GM12878 (cell line): ENCODE measurements at regions of chr12 and their contacts with region 1.

Region 1: DNA sequence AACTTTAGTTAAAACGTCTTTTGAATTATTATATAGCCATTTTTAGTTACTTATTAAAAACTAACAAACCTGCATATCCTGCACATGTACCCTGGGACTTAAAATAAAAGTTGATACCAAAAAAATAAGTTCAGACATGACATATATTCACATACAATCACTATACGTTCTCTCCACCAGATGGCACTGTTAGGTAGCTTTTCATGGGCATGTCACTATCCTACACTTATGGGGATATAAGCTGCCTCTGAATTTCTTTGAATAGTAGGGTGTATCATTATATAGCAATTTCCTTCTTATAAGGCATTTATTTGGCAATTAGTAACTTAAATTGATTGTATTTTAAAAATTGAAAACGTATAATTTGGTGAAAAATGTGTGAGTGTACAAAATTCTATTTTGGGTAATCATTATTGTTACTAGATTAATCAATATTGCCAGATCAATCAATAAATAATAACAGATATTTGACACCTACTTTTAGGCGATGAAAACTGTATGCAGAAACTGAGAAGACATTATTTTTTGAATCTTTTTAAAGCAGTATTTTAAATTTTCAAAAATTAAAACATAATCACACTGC is 31.8 kb upstream of the OR10A7 start:
- DNase-seq: peak; percentile 53
- ATAC-seq: peak; percentile 92
- H3K4me3 ChIP-seq: no peak overlapping the region
- H3K27ac ChIP-seq: no peak overlapping the region
- H3K4me1 ChIP-seq: no peaks in the 10 kb centered on the region
- H3K27me3 ChIP-seq: no peaks in the 10 kb centered on the region
- CTCF ChIP-seq: peak; percentile 50 to 68 (median 53); a peak in 5 of 6 replicates
- EP300 ChIP-seq: no peak
- POLR2A ChIP-seq: no peak
- RAD21 ChIP-seq: peak; percentile 88

Region 2: GRCh38 chr12:55619354-55620138 is 430.5 kb after region 1 on chr12:
- CTCF ChIA-PET with region 1: interaction called, 60 read pairs
- POLR2A ChIA-PET with region 1: no interaction called
- RAD21 ChIA-PET with region 1: interaction called, 21 read pairs
- SMC1A ChIA-PET with region 1: interaction called, 6 read pairs
- in situ Hi-C with region 1: no loop called
- intact Hi-C with region 1: loop called (anchors 1 kb)
- DNase-seq: peak; percentile 74
- ATAC-seq: peak; percentile 85
- H3K4me3 ChIP-seq: no peak overlapping the region
- H3K27ac ChIP-seq: no peak overlapping the region
- H3K4me1 ChIP-seq: no peaks in the 10 kb centered on the region
- H3K27me3 ChIP-seq: no peaks in the 10 kb centered on the region
- CTCF ChIP-seq: peak; percentile 62 to 88 (median 85)
- EP300 ChIP-seq: no peak
- POLR2A ChIP-seq: no peak
- RAD21 ChIP-seq: peak; percentile 89